ENCODE measurements at regions of chr12 and their contacts with region 1.

Region 1: GRCh38 chr12:50174971-50175715 is 8.0 kb upstream of the CERS5 start:
- DNase-seq: no peak
- ATAC-seq: peak; percentile 67
- H3K4me3 ChIP-seq: no peak overlapping the region
- H3K27ac ChIP-seq: no peak overlapping the region
- H3K4me1 ChIP-seq: no peaks in the 10 kb centered on the region
- H3K27me3 ChIP-seq: no peaks in the 10 kb centered on the region

Region 2: GRCh38 chr12:49967042-49967776 is 207.9 kb before region 1 on chr12:
- intact Hi-C with region 1: loop called in 1 of 2 experiments (anchors 10 kb)
- DNase-seq: peak; percentile 95 to 98
- ATAC-seq: peak; percentile 93
- H3K4me3 ChIP-seq: no peak overlapping the region
- H3K27ac ChIP-seq: no peak overlapping the region
- H3K4me1 ChIP-seq: no peaks in the 10 kb centered on the region
- H3K27me3 ChIP-seq: no peaks in the 10 kb centered on the region